ENCODE measurements at regions of chr10 and their contacts with region 1.

Region 1: GRCh38 chr10:71212318-71213126 is at the start of gene UNC5B:
- DNase-seq: peak; percentile 91
- H3K4me3 ChIP-seq: peak within 1 kb of the TSS; percentile 71
- H3K27ac ChIP-seq: peak within 1 kb of the TSS; percentile 78
- H3K4me1 ChIP-seq: no peaks in the 10 kb centered on the region
- H3K27me3 ChIP-seq: peaks cover 30% of the 10 kb centered on the region
- CTCF ChIP-seq: no peak
- total RNA-seq, gene UNC5B: 18.4 to 18.5 TPM

Region 2: GRCh38 chr10:70699659-70700174 is 512.8 kb before region 1 on chr10:
- intact Hi-C with region 1: no loop called
- DNase-seq: no peak
- H3K4me3 ChIP-seq: no peak overlapping the region
- H3K27ac ChIP-seq: no peak overlapping the region
- H3K4me1 ChIP-seq: no peaks in the 10 kb centered on the region
- H3K27me3 ChIP-seq: no peaks in the 10 kb centered on the region
- CTCF ChIP-seq: no peak

Region 3: GRCh38 chr10:70903262-70903921 is 309.1 kb before region 1 on chr10:
- intact Hi-C with region 1: loop called (anchors 5 kb)
- DNase-seq: peak; percentile 59
- H3K4me3 ChIP-seq: no peak overlapping the region
- H3K27ac ChIP-seq: no peak overlapping the region
- H3K4me1 ChIP-seq: no peaks in the 10 kb centered on the region
- H3K27me3 ChIP-seq: no peaks in the 10 kb centered on the region
- CTCF ChIP-seq: peak; percentile 86

Region 4: GRCh38 chr10:70925377-70926225 is 286.9 kb before region 1 on chr10:
- intact Hi-C with region 1: loop called (anchors 5 kb)
- DNase-seq: peak; percentile 32
- H3K4me3 ChIP-seq: no peak overlapping the region
- H3K27ac ChIP-seq: no peak overlapping the region
- H3K4me1 ChIP-seq: no peaks in the 10 kb centered on the region
- H3K27me3 ChIP-seq: no peaks in the 10 kb centered on the region
- CTCF ChIP-seq: peak; percentile 96

Region 5: DNA sequence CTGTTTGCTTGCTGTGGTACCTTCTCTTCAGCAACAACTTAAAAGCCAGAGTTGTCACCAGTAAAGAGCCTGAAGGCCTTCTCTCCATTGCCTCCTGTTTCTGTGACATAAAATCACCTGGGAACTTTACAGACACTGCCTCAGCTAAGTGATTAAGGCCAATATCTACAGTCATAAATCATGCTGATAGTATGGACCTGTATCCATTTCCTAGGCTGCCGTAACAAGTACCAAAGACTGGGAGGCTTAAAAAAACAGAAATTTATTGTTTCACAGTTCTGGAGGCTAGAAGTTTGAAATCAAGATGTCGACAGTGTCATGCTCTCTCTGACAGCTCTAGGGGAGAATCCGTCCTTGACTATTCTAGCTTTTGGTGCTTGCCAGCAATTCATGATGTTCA is 108.6 kb before region 1 on chr10:
- intact Hi-C with region 1: no loop called
- DNase-seq: no peak
- H3K4me3 ChIP-seq: no peak overlapping the region
- H3K27ac ChIP-seq: no peak overlapping the region
- H3K4me1 ChIP-seq: no peaks in the 10 kb centered on the region
- H3K27me3 ChIP-seq: no peaks in the 10 kb centered on the region
- CTCF ChIP-seq: no peak

Region 6: GRCh38 chr10:71268247-71268691 is 55.7 kb after region 1 on chr10:
- intact Hi-C with region 1: loop called (anchors 5 kb)
- DNase-seq: no peak
- H3K4me3 ChIP-seq: no peak overlapping the region
- H3K27ac ChIP-seq: no peak overlapping the region
- H3K4me1 ChIP-seq: no peaks in the 10 kb centered on the region
- H3K27me3 ChIP-seq: no peaks in the 10 kb centered on the region
- CTCF ChIP-seq: peak; percentile 21

Region 7: GRCh38 chr10:71285180-71285545 is 72.6 kb after region 1 on chr10:
- intact Hi-C with region 1: loop called (anchors 5 kb)
- DNase-seq: peak; percentile 46
- H3K4me3 ChIP-seq: no peak overlapping the region
- H3K27ac ChIP-seq: no peak overlapping the region
- H3K4me1 ChIP-seq: no peaks in the 10 kb centered on the region
- H3K27me3 ChIP-seq: no peaks in the 10 kb centered on the region
- CTCF ChIP-seq: peak; percentile 76

Measured in colonic mucosa (tissue), 4 donors.